GM10248 (cell line): ENCODE measurements at regions of chr2 and their contacts with region 1.

Region 1: GRCh38 chr2:20781656-20782265 is 41.1 kb downstream of the LDAH start:
- DNase-seq: no peak
- CTCF ChIP-seq: peak; percentile 76

Region 2: DNA sequence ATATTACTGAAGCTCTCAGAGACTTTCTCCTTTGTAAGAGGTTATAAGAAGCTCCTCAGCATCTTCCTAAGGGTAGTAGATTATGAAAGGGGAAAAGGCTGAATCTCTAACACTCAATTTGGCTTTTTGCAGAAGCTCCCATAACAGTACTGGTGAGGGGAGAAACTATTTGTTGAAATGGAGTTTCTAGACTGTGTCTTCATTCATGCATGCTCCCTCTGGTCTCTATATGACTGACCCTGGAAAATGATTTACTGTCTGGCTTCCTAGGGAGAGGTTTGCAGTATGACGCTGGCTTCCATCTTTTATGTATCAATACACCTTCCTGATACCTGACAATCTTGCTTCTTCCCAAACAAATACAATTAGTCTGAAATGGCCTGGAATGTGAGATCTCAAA is 22.8 kb before region 1 on chr2:
- CTCF ChIA-PET with region 1: interaction called, 17 read pairs
- POLR2A ChIA-PET with region 1: no interaction called
- DNase-seq: no peak
- CTCF ChIP-seq: no peak

Region 3: GRCh38 chr2:20771299-20771698 is 10.5 kb before region 1 on chr2:
- CTCF ChIA-PET with region 1: interaction called, 20 read pairs
- POLR2A ChIA-PET with region 1: no interaction called
- DNase-seq: no peak
- CTCF ChIP-seq: no peak

Region 4: DNA sequence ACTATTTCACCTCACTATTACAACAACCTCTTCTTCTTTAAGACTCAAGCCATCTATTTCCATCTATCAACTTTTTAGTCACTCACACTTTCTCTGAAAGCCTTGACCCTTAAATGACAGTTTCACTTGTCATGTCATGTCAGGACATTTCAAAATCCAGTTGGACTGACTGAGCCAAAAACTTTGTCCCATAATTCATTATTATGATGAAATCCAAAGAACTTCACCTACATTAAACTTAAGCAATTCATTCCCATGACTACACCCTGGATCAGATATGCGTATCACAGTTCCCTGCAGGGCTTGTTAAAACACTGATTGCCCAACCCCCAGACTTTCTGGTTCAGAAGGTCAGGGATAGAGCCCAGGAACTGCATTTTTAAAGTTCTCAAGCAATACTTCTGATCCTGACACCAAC is 14.6 kb after region 1 on chr2:
- CTCF ChIA-PET with region 1: interaction called, 16 read pairs
- POLR2A ChIA-PET with region 1: no interaction called
- DNase-seq: no peak
- CTCF ChIP-seq: no peak